Right ventricle myocardium inferior (tissue), 1 donor: ENCODE measurements at regions of chr22 and their contacts with region 1.

Region 1: GRCh38 chr22:37643225-37643847 is 3.9 kb downstream of the SH3BP1 start:
- DNase-seq: peak; percentile 94
- ATAC-seq: peak; percentile 86

Region 2: GRCh38 chr22:37658133-37659065 is 15.1 kb after region 1 on chr22 and contains the start of gene PDXP:
- intact Hi-C with region 1: no loop called
- DNase-seq: peak; percentile 99
- ATAC-seq: peak; percentile 98
- total RNA-seq, gene PDXP: 21.4 TPM

Region 3: DNA sequence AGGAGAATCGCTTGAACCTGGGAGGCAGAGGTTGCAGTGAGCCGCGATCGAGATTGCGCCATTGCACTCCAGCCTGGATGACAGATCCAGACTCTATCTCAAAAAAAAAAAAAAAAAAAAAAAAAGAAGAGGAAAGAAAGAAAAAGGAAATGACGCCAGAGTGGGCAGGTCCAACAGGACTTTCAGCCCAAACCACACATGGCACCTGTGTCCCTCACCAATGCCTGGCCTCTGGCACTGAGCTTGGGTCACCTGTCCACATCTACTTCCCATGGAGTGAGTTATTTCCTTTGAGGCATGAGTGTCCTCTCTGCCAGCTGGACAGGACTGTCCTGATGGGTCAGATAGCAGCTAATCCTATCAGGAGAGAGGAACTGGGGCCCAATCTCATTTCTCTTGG is 149.2 kb after region 1 on chr22:
- intact Hi-C with region 1: loop called (anchors 5 kb)
- DNase-seq: no peak
- ATAC-seq: no peak